Spleen (tissue), 13 donors: ENCODE measurements at regions of chr2 and their contacts with region 1.

Region 1: DNA sequence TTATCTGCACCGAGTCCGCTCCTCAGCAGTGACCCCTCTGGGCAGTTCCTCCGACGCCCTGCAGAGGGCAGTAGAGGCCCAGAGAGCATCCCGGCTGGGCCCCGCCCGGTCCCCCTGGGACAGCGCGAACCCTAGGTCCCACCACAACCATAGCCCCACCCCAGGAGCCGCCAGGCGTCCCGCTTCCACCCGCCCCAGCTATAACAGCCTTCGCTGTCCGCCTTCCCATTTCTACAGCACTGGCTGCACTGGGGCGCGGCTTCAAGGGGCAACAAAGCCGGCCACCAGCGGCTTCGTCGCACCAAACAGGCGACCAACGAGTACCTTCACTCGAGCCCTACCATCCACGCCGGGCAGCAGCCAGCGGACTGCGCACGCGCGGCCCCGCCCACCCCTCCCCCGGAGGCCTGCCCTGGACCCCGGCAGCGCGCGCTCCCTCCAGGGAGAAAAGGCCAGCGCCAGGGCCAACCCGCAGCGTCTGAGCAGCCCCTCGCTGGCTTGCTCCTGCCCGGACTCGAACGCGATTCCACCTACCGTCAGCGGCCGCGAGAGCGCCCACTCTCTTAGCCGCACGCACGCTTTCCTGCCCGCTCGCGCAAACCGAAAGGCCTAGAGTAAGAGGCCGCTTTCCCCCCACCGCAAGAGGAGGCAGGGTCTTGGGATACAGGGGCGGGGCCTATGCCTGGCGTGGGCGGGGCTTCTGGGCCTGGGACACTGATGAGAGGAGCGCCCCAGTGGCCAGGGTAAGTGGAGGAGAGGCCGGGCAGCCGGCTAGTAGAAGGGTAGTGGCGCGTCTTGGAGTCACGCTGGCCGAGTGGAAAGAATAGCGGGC is at the start of gene NHEJ1:
- DNase-seq: peak; percentile 98
- H3K4me3 ChIP-seq: peak within 1 kb of the TSS; percentile 52 to 81 (median 73)
- H3K27ac ChIP-seq: peak within 1 kb of the TSS; percentile 90 to 97 (median 96)
- H3K4me1 ChIP-seq: peaks cover 7 to 24% (median 14%) of the 10 kb centered on the region in 6 donors
- H3K27me3 ChIP-seq: no peaks in the 10 kb centered on the region
- CTCF ChIP-seq: peak; percentile 94 to 100 (median 98)
- POLR2A ChIP-seq: peak in 1 of 3 donors; percentile 69
- total RNA-seq, gene NHEJ1: 13.3 to 25.9 (median 16.6) TPM

Region 2: GRCh38 chr2:219294356-219295351 is 134.3 kb after region 1 on chr2:
- intact Hi-C with region 1: loop called (anchors 5 kb)
- DNase-seq: peak; percentile 99
- H3K4me3 ChIP-seq: peak overlapping the region; percentile 34 to 71 (median 48)
- H3K27ac ChIP-seq: peak overlapping the region; percentile 38 to 86 (median 76)
- H3K4me1 ChIP-seq: peaks cover 0 to 30% (median 18%) of the 10 kb centered on the region in 6 donors
- H3K27me3 ChIP-seq: peaks cover 0 to 18% (median 0%) of the 10 kb centered on the region in 7 donors
- CTCF ChIP-seq: peak; percentile 89 to 100 (median 99)
- POLR2A ChIP-seq: no peak